Calu3 (cell line): ENCODE measurements at regions of chr22 and their contacts with region 1.

Region 1: DNA sequence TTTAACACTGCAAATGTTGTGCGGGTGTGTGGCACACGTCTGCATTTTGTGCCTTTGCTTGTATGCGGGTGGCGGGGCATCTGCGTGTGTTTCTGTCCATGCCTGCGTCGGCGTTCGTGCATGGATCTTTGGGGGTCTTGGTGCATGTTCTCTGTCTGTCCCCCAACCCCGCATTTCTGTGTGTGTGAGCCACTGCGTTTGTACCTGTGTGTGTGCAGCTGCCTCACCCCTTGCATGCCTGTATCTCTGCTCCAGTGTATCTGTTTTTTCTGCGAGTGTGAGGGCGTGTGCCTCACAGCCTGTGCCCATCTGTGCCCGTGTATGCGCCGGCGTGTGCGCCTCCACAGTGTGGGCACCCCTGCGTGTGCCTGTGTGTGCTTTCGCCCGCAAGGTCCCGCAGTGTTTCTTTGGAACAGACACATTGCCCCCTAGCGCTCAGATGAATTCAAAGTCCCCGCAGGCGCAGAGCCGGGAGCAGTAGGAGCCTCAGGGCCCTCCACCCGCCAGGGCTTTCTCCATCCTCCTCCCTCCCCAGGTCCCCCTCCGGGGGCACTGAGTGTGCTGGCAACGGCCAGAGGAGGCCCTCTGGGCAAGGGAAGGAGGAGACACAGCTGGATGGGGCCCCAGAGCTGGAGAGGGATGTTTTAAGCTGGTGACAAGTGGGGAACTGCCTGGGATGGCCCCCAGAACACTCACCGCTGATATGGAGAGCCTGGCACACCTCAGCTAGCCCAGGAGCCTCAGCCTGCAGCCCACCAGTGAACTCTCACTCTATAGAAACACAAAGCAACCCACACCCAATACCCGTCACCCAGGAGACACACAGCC is 3.1 kb upstream of the MN1 start:
- DNase-seq: peak; percentile 82
- H3K4me3 Mint-ChIP-seq: no peak overlapping the region
- H3K27ac Mint-ChIP-seq: no peak overlapping the region
- H3K4me1 Mint-ChIP-seq: peaks cover 18% of the 10 kb centered on the region
- H3K27me3 Mint-ChIP-seq: peaks cover 36% of the 10 kb centered on the region
- CTCF ChIP-seq: peak; percentile 70

Region 2: DNA sequence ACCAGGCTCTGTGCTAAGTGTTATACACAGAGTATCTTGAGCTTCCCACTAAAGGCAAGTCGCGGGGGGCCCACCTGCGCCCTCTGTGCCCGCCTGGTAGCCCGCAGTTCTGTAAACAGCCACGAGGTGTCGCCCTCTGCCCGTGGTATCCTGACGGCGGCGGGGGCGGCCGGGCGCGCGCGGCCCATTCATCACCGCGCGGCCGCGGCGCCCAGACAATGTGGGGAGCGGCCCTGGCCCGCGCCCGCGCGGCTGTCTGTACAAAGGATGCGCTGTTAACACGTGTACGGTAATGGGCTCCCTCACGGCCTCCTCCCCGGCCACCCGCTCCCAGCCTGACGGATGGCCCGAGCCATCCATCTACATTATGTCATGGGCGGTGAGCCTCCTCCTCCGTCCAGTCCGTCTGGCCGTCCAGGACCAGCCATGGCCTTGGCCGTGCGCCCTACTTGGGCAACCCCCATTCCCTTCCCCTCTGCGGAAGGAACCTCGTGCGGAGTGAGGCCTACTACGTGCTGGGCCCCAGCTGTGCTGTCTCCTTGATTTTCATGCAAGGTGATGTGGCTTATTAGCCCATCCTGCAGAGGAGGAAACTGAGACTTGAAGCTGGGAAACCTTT is 1047.9 kb before region 1 on chr22:
- CTCF ChIA-PET with region 1: no interaction called
- intact Hi-C with region 1: loop called (anchors 2 kb)
- DNase-seq: peak; percentile 73
- H3K4me3 Mint-ChIP-seq: peak overlapping the region; percentile 54
- H3K27ac Mint-ChIP-seq: no peak overlapping the region
- H3K4me1 Mint-ChIP-seq: no peaks in the 10 kb centered on the region
- H3K27me3 Mint-ChIP-seq: no peaks in the 10 kb centered on the region
- CTCF ChIP-seq: peak; percentile 95

Region 3: GRCh38 chr22:27405672-27406388 is 398.9 kb before region 1 on chr22:
- CTCF ChIA-PET with region 1: interaction called, 3 read pairs
- intact Hi-C with region 1: loop called (anchors 2 kb)
- DNase-seq: peak; percentile 84
- H3K4me3 Mint-ChIP-seq: no peak overlapping the region
- H3K27ac Mint-ChIP-seq: no peak overlapping the region
- H3K4me1 Mint-ChIP-seq: no peaks in the 10 kb centered on the region
- H3K27me3 Mint-ChIP-seq: peaks cover 24% of the 10 kb centered on the region
- CTCF ChIP-seq: peak; percentile 91

Region 4: GRCh38 chr22:27627444-27627833 is 177.2 kb before region 1 on chr22:
- CTCF ChIA-PET with region 1: no interaction called
- intact Hi-C with region 1: loop called (anchors 10 kb)
- DNase-seq: no peak
- H3K4me3 Mint-ChIP-seq: no peak overlapping the region
- H3K27ac Mint-ChIP-seq: no peak overlapping the region
- H3K4me1 Mint-ChIP-seq: peaks cover 17% of the 10 kb centered on the region
- H3K27me3 Mint-ChIP-seq: no peaks in the 10 kb centered on the region
- CTCF ChIP-seq: no peak